Activated B cell treated with CpG ODN at 0.5 μM for 24 hours (primary cell): ENCODE measurements at regions of chr1 and their contacts with region 1.

Region 1: DNA sequence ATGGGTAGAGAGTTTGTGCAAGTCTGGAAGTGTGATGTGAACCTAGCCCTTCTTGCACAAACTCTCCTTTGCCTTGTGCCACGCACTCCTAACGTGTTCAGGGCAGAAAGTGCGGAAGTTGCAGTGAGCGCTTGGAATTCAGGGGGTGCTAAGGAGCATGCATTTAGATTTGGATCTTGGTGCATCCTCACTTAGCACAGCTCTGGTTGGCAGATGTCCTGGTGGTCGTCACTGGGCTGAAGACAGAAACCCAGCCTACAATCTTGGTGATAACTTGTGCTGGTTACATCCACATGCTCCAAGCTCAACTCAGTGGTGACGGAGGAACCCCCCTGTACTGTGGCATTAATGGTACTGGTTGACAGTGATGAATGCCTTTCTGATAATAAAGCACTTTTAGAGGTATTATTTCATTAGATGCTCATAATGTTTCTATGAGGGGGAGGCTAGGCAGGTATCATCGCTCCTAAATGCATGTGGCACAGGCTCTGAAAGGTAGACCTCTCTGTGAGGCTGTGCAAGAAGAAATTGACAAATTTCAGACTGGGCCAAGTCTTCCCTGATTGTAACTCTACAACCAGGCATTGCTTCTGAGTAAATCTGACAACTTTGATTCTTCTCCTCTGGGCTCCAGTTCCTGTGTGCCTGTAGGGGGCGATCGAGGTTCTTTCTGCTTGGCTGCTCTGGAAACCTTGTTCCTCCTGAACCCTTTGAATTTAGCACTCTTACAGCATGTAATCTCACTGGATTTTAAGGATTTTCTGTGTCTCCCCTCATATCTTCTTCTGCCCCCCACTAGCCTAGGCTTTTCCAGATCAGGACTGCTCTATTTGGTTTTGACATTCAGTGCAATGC is 40.6 kb downstream of the MAPKAPK2 start:
- DNase-seq: no peak
- ATAC-seq: peak; percentile 63
- H3K4me3 Mint-ChIP-seq: no peak overlapping the region
- H3K27ac Mint-ChIP-seq: peak overlapping the region; percentile 63
- H3K4me1 Mint-ChIP-seq: peaks cover 48% of the 10 kb centered on the region
- H3K27me3 Mint-ChIP-seq: no peaks in the 10 kb centered on the region
- CTCF ChIP-seq: no peak

Region 2: DNA sequence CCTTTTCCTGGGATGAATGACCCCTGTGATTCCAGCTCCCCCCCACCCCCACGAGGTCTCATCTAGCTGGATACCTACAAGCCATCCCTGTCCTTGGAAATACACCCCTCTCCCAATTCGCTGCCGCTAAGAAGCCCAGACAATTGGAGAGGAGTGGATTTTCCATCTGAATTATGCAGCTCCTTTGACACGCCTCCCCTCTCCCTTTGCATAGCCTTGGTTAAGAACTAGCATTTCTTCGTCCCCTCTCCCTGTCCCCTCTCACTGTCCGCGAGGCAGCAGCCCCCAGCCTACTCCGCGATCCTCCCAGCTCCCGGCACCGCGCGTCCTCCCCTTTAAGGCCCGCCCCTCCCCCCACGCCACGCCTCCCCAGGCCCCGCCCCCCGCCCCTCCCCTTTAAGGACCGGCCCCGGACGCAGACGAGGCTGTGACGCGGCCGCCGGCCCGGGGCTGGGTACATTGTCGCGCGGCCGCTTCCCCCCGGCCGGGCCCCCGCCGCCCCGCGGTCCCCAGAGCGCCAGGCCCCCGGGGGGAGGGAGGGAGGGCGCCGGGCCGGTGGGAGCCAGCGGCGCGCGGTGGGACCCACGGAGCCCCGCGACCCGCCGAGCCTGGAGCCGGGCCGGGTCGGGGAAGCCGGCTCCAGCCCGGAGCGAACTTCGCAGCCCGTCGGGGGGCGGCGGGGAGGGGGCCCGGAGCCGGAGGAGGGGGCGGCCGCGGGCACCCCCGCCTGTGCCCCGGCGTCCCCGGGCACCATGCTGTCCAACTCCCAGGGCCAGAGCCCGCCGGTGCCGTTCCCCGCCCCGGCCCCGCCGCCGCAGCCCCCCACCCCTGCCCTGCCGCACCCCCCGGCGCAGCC is 40.6 kb before region 1 on chr1 and contains the start of gene MAPKAPK2:
- CTCF ChIA-PET with region 1: interaction called, 5 read pairs
- POLR2A ChIA-PET with region 1: interaction called, 10 read pairs
- intact Hi-C with region 1: loop called (anchors 1 kb)
- DNase-seq: peak; percentile 72
- ATAC-seq: peak; percentile 65
- H3K4me3 Mint-ChIP-seq: peak within 1 kb of the TSS; percentile 94
- H3K27ac Mint-ChIP-seq: peak within 1 kb of the TSS; percentile 90
- H3K4me1 Mint-ChIP-seq: peaks cover 80% of the 10 kb centered on the region
- H3K27me3 Mint-ChIP-seq: no peaks in the 10 kb centered on the region
- CTCF ChIP-seq: no peak
- total RNA-seq, gene MAPKAPK2: 71.2 and 72.1 TPM in 2 replicates

Region 3: GRCh38 chr1:206753141-206753540 is 27.8 kb after region 1 on chr1:
- CTCF ChIA-PET with region 1: no interaction called
- POLR2A ChIA-PET with region 1: no interaction called
- intact Hi-C with region 1: no loop called
- DNase-seq: no peak
- ATAC-seq: no peak
- H3K4me3 Mint-ChIP-seq: no peak overlapping the region
- H3K27ac Mint-ChIP-seq: no peak overlapping the region
- H3K4me1 Mint-ChIP-seq: peaks cover 6% of the 10 kb centered on the region
- H3K27me3 Mint-ChIP-seq: no peaks in the 10 kb centered on the region
- CTCF ChIP-seq: no peak

Region 4: GRCh38 chr1:206808615-206809014 is 83.3 kb after region 1 on chr1:
- CTCF ChIA-PET with region 1: interaction called, 28 read pairs
- POLR2A ChIA-PET with region 1: no interaction called
- intact Hi-C with region 1: loop called (anchors 1 kb)
- DNase-seq: no peak
- ATAC-seq: peak; percentile 94
- H3K4me3 Mint-ChIP-seq: no peak overlapping the region
- H3K27ac Mint-ChIP-seq: no peak overlapping the region
- H3K4me1 Mint-ChIP-seq: peaks cover 32% of the 10 kb centered on the region
- H3K27me3 Mint-ChIP-seq: no peaks in the 10 kb centered on the region
- CTCF ChIP-seq: no peak

Region 5: GRCh38 chr1:206839857-206840256 is 114.5 kb after region 1 on chr1:
- CTCF ChIA-PET with region 1: no interaction called
- POLR2A ChIA-PET with region 1: no interaction called
- intact Hi-C with region 1: no loop called
- DNase-seq: no peak
- ATAC-seq: no peak
- H3K4me3 Mint-ChIP-seq: no peak overlapping the region
- H3K27ac Mint-ChIP-seq: no peak overlapping the region
- H3K4me1 Mint-ChIP-seq: peaks cover 3% of the 10 kb centered on the region
- H3K27me3 Mint-ChIP-seq: no peaks in the 10 kb centered on the region
- CTCF ChIP-seq: no peak

Region 6: GRCh38 chr1:206905280-206906164 is 180.2 kb after region 1 on chr1:
- CTCF ChIA-PET with region 1: interaction called, 16 read pairs
- POLR2A ChIA-PET with region 1: interaction called, 5 read pairs
- intact Hi-C with region 1: no loop called
- DNase-seq: no peak
- ATAC-seq: peak; percentile 93
- H3K4me3 Mint-ChIP-seq: peak overlapping the region; percentile 36
- H3K27ac Mint-ChIP-seq: peak overlapping the region; percentile 89
- H3K4me1 Mint-ChIP-seq: peaks cover 77% of the 10 kb centered on the region
- H3K27me3 Mint-ChIP-seq: no peaks in the 10 kb centered on the region
- CTCF ChIP-seq: no peak

Region 7: DNA sequence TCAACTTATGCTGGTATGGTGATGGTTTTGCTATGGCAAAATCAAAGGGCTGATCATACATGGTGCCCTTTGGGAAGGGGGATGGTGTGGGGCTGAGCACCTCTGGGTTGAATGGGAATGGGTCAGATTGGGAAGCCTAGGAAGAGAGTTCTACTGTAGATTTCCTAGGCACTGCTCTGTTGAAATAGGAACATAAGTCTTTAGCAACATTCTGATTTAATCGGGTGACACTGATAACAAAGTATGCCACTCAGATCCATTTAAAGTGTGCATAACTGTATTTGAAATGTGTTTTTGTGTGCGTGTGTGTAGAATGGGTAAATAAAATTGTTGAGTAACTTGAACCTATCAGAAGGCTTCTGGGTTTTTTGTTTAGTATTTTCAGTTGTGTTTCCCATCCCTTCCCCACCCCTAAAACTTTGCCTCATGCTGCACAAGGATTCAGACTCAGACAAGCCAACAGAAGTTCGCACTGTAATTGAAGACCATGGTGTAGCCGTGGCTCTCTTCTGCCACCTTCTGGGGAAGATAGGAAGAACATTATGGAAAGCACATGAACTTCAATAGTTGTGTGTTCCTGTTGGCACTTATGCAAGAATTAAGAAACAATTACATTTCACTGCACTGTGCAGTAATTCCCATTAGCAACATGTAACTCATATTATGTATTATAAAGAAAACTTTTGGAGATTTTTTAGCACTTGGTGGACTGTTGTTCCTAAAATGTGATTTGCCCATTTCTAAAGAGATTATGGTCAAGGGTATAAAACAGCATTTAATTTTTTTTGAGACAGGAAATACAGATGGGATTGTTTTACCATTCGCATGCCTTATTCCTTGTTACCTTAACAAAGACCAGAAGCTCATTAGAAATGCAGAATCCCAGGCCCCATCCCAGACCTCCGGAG is 352.4 kb after region 1 on chr1:
- CTCF ChIA-PET with region 1: no interaction called
- POLR2A ChIA-PET with region 1: no interaction called
- intact Hi-C with region 1: loop called (anchors 5 kb)
- DNase-seq: no peak
- ATAC-seq: peak; percentile 95
- H3K4me3 Mint-ChIP-seq: no peak overlapping the region
- H3K27ac Mint-ChIP-seq: no peak overlapping the region
- H3K4me1 Mint-ChIP-seq: no peaks in the 10 kb centered on the region
- H3K27me3 Mint-ChIP-seq: no peaks in the 10 kb centered on the region
- CTCF ChIP-seq: no peak